Vagina (tissue), 2 donors: ENCODE measurements at regions of chr19 and their contacts with region 1.

Region 1: GRCh38 chr19:21934146-21934545 is 76.6 kb downstream of the ZNF208 start:
- DNase-seq: no peak
- H3K4me3 ChIP-seq: no peak overlapping the region
- H3K27ac ChIP-seq: no peak overlapping the region
- H3K4me1 ChIP-seq: no peaks in the 10 kb centered on the region
- H3K27me3 ChIP-seq: no peaks in the 10 kb centered on the region
- CTCF ChIP-seq: no peak
- POLR2A ChIP-seq: no peak

Region 2: GRCh38 chr19:21767065-21767800 is 166.9 kb before region 1 on chr19 and contains the start of gene ZNF100:
- intact Hi-C with region 1: no loop called
- DNase-seq: no peak
- H3K4me3 ChIP-seq: peak within 1 kb of the TSS; percentile 57 to 78
- H3K27ac ChIP-seq: peak within 1 kb of the TSS; percentile 70
- H3K4me1 ChIP-seq: peaks cover 14% of the 10 kb centered on the region
- H3K27me3 ChIP-seq: no peaks in the 10 kb centered on the region
- CTCF ChIP-seq: no peak
- POLR2A ChIP-seq: peak in 1 of 2 donors; percentile 40
- total RNA-seq, gene ZNF100: 5.4 TPM

Region 3: DNA sequence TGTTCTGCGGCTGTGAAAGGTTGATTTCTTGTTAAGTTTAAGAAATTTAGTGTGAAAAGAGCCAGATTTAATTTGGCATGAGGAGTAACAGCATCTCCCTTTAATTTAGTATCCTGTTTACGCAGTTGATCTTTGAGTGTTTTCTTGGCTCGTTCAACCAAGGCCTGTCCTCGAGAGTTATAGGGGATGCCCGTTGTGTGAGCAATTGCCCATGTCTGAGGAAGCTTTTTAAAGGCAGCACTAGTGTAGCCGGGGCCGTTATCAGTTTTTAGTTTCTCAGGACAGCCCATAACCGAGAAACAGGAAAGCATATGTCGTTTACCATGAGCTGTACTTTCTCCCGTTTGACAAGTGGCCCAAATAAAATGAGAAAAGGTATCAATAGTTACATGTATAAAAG is 50.6 kb before region 1 on chr19:
- intact Hi-C with region 1: no loop called
- DNase-seq: no peak
- H3K4me3 ChIP-seq: no peak overlapping the region
- H3K27ac ChIP-seq: no peak overlapping the region
- H3K4me1 ChIP-seq: no peaks in the 10 kb centered on the region
- H3K27me3 ChIP-seq: no peaks in the 10 kb centered on the region
- CTCF ChIP-seq: no peak
- POLR2A ChIP-seq: no peak

Region 4: DNA sequence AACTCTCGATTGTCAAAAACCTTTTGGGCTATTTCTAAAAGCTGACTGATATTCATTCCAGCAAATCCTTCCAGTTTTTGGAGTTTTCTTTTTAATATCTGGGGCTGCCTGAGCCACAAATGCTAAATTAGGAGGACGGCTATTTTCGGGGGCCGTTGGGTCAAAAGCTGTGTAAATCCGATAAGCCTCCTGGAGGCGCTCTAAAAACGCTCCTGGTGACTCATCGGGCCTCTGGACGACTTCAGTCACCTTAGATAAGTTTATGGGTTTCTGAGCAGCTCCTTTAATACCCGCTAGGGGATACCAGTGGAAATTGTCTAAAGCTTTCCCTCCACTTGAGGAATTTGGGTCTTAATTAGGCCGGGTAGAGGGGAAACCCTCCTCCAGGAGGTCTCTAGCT is 1249.1 kb after region 1 on chr19:
- intact Hi-C with region 1: loop called (anchors 5 kb)
- DNase-seq: no peak
- H3K4me3 ChIP-seq: no peak overlapping the region
- H3K27ac ChIP-seq: no peak overlapping the region
- H3K4me1 ChIP-seq: no peaks in the 10 kb centered on the region
- H3K27me3 ChIP-seq: no peaks in the 10 kb centered on the region
- CTCF ChIP-seq: no peak
- POLR2A ChIP-seq: no peak